GM12878 (cell line): ENCODE measurements at regions of chr4 and their contacts with region 1.

Region 1: DNA sequence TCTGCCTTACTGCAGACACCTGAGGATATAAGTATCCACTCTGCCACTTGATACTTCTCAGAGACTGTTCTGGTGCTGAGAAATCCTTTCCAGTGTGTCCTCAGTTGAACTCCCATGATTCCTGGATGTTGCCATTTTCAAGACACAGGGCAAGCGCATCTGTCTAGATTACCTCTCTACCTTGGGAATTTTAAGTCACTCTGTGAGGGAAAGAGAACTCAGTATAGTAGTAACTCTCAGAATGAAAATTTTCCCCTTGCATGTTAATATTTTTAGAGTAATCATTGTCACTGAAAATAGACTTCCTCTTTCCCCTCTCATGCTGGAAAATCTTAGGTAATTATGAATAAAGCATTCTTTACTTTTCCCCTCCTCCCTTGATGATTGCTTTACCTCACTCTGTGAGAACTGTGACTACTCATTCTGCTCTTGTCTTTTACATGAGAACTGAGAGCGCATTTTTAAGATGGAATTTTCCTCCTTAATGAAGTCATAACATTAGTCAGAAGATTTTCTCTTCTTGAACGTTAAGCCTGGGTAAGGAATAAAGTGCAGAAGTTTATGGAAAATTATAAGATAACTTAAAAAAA is 45.0 kb downstream of the TET2 start:
- DNase-seq: peak; percentile 81
- ATAC-seq: peak; percentile 65
- H3K4me3 ChIP-seq: 0 out of 2 replicates have a peak overlapping the region, but pooled peaks have one; percentile 10
- H3K27ac ChIP-seq: peak overlapping the region; percentile 81
- H3K4me1 ChIP-seq: peaks cover 46% of the 10 kb centered on the region
- H3K27me3 ChIP-seq: no peaks in the 10 kb centered on the region
- CTCF ChIP-seq: no peak
- EP300 ChIP-seq: peak in 1 of 2 experiments; percentile 72; a peak in 2 of 4 replicates
- POLR2A ChIP-seq: no peak
- RAD21 ChIP-seq: peak; percentile 34; the same call in 1 of the 2 replicates

Region 2: GRCh38 chr4:104868958-104869357 is 322.8 kb before region 1 on chr4:
- CTCF ChIA-PET with region 1: no interaction called
- POLR2A ChIA-PET with region 1: no interaction called
- RAD21 ChIA-PET with region 1: no interaction called
- SMC1A ChIA-PET with region 1: no interaction called
- in situ Hi-C with region 1: no loop called
- intact Hi-C with region 1: loop called (anchors 5 kb)
- DNase-seq: peak; percentile 79
- ATAC-seq: peak; percentile 93
- H3K4me3 ChIP-seq: peak overlapping the region; percentile 24; the same call in 1 of the 2 replicates
- H3K27ac ChIP-seq: peak overlapping the region; percentile 67
- H3K4me1 ChIP-seq: peaks cover 36% of the 10 kb centered on the region
- H3K27me3 ChIP-seq: no peaks in the 10 kb centered on the region
- CTCF ChIP-seq: no peak
- EP300 ChIP-seq: peak; percentile 92 to 96
- POLR2A ChIP-seq: no peak
- RAD21 ChIP-seq: peak; percentile 24; the same call in 1 of the 2 replicates

Region 3: DNA sequence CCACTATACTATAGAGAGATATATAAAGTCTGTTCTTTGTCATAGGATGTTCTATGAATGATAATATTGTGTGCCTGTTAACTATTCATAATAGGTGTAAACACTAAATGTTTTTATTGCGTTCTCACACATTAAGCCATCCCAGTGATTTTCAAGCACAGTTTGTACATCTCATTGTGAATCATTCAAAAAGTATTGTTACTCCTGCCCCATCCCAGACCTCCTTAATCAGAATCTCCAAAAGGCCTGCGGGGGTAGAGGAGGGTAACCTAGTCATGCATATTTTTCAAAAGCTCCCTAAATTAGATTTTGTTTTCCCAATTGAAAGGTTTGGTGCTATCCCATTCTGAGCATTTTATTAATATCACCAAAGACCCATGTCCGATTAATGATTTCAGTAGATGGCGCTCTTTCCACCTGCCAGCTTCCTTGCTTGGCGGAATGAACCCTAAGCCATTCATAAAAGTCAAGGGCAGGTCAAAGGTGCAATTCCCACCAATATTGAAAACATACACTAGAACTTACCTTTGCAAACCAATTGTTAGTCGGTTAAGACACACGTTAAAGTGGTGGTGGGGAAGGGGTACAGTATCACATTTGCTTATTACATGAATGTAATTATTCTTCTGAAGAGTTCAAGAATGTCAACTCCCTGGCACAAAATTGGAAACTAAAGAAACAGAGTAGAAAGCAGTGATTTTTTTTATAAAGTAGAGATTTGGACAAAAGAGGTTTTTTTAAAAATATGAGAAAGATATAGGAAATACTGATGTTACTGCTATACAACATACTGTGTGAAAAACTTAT is 50.8 kb before region 1 on chr4:
- CTCF ChIA-PET with region 1: interaction called, 14 read pairs
- POLR2A ChIA-PET with region 1: interaction called, 3 read pairs
- RAD21 ChIA-PET with region 1: interaction called, 4 read pairs
- SMC1A ChIA-PET with region 1: interaction called, 4 read pairs
- in situ Hi-C with region 1: no loop called
- intact Hi-C with region 1: loop called (anchors 2 kb)
- DNase-seq: no peak
- ATAC-seq: peak; percentile 59
- H3K4me3 ChIP-seq: no peak overlapping the region
- H3K27ac ChIP-seq: no peak overlapping the region
- H3K4me1 ChIP-seq: no peaks in the 10 kb centered on the region; the same call in none of the 2 replicates
- H3K27me3 ChIP-seq: no peaks in the 10 kb centered on the region
- CTCF ChIP-seq: peak; percentile 51 to 83 (median 60); a peak in 5 of 6 replicates
- EP300 ChIP-seq: no peak
- POLR2A ChIP-seq: no peak
- RAD21 ChIP-seq: peak; percentile 92

Region 4: GRCh38 chr4:105162123-105162796 is 29.5 kb before region 1 on chr4:
- CTCF ChIA-PET with region 1: no interaction called
- POLR2A ChIA-PET with region 1: no interaction called
- RAD21 ChIA-PET with region 1: interaction called, 4 read pairs
- SMC1A ChIA-PET with region 1: interaction called, 13 read pairs
- in situ Hi-C with region 1: no loop called
- intact Hi-C with region 1: no loop called
- DNase-seq: no peak
- ATAC-seq: peak; percentile 70
- H3K4me3 ChIP-seq: no peak overlapping the region
- H3K27ac ChIP-seq: no peak overlapping the region; the same call in 1 of the 2 replicates
- H3K4me1 ChIP-seq: peaks cover 5% of the 10 kb centered on the region; the same call in 1 of the 2 replicates
- H3K27me3 ChIP-seq: no peaks in the 10 kb centered on the region
- CTCF ChIP-seq: no peak
- EP300 ChIP-seq: no peak
- POLR2A ChIP-seq: no peak
- RAD21 ChIP-seq: no peak

Region 5: DNA sequence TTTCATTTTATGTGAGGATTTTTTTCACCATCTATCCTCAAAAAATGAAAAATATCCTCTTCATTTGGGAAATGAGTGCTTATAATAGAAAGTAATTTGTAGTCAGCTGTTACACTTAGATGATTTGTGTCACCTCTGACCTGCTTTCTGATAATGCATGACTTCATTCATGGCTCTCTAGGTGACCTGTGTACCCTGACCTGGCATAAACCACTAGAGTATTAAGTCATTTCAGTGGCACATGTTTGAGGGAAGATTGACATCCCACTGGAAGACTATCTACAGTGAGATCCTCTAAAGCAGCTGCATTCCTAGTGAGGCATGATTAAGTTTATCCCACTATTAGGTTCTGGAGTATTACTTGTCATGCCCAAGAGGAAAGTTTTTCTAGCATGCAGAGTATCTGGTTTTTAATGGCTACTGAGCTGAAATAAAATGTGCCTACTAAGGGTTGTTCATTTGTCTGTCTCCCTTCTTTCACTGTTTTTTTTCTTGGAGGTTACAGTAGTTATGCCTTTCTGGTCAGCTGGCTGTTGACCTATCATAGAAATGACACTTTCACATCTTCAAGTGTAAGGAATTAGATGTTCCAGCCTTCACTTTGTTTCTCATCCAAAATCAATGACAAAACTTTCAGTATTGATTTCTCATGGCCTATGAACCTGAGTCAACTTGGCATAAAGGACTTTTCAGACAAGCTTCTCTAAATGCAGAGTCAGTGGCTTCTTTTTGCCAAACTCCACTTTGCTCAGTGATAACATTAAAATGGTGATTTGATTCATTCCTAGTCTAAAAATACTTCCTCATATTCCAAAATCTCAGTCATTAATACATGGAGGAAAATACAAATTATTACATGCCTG is 11.9 kb before region 1 on chr4:
- CTCF ChIA-PET with region 1: no interaction called
- POLR2A ChIA-PET with region 1: interaction called, 3 read pairs
- RAD21 ChIA-PET with region 1: no interaction called
- SMC1A ChIA-PET with region 1: interaction called, 21 read pairs
- in situ Hi-C with region 1: no loop called
- intact Hi-C with region 1: no loop called
- DNase-seq: no peak
- ATAC-seq: peak; percentile 82
- H3K4me3 ChIP-seq: no peak overlapping the region
- H3K27ac ChIP-seq: no peak overlapping the region
- H3K4me1 ChIP-seq: no peaks in the 10 kb centered on the region
- H3K27me3 ChIP-seq: no peaks in the 10 kb centered on the region
- CTCF ChIP-seq: no peak
- EP300 ChIP-seq: no peak
- POLR2A ChIP-seq: no peak
- RAD21 ChIP-seq: no peak

Region 6: GRCh38 chr4:105215609-105216313 is 24.0 kb after region 1 on chr4:
- CTCF ChIA-PET with region 1: interaction called, 5 read pairs
- POLR2A ChIA-PET with region 1: interaction called, 12 read pairs
- RAD21 ChIA-PET with region 1: interaction called, 4 read pairs
- SMC1A ChIA-PET with region 1: interaction called, 7 read pairs
- in situ Hi-C with region 1: no loop called
- intact Hi-C with region 1: no loop called
- DNase-seq: peak; percentile 83
- ATAC-seq: peak; percentile 84
- H3K4me3 ChIP-seq: no peak overlapping the region
- H3K27ac ChIP-seq: peak overlapping the region; percentile 92
- H3K4me1 ChIP-seq: peaks cover 8% of the 10 kb centered on the region; the same call in 1 of the 2 replicates
- H3K27me3 ChIP-seq: no peaks in the 10 kb centered on the region
- CTCF ChIP-seq: no peak
- EP300 ChIP-seq: no peak
- POLR2A ChIP-seq: no peak
- RAD21 ChIP-seq: no peak

Region 7: GRCh38 chr4:105291925-105292324 is 100.2 kb after region 1 on chr4:
- CTCF ChIA-PET with region 1: no interaction called
- POLR2A ChIA-PET with region 1: no interaction called
- RAD21 ChIA-PET with region 1: no interaction called
- SMC1A ChIA-PET with region 1: no interaction called
- in situ Hi-C with region 1: no loop called
- intact Hi-C with region 1: no loop called
- DNase-seq: no peak
- ATAC-seq: no peak
- H3K4me3 ChIP-seq: no peak overlapping the region
- H3K27ac ChIP-seq: no peak overlapping the region
- H3K4me1 ChIP-seq: no peaks in the 10 kb centered on the region
- H3K27me3 ChIP-seq: no peaks in the 10 kb centered on the region
- CTCF ChIP-seq: no peak
- EP300 ChIP-seq: no peak
- POLR2A ChIP-seq: no peak
- RAD21 ChIP-seq: no peak

Region 8: DNA sequence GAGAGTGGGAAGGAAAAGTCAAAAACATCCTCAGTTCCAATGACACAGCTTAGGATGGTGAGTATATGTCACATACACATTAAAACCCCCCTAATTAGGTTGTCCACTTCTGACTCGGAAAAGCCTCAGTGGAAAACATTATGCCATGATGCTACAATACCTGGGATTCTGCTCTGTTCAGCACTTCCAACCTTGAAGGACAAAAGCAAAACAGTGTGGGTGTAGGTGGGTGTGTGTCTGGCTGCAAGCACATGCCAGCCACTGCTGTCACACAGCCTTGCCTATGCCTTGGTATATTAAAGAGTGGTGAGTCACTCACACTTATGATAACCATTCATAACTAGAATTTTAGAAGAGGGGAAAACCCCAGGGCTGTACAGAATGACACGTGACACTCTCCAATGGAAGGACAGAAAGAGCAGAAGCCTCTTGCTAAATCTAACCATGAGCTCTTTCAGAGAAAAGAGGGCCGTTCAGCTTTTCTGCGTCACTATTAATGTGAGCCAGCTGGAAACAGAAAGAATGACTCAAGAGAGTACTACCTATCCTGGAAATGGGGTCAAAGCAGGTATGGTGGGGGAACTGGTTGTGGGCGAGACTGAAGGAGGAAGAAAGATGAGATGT is 114.6 kb after region 1 on chr4:
- CTCF ChIA-PET with region 1: no interaction called
- POLR2A ChIA-PET with region 1: no interaction called
- RAD21 ChIA-PET with region 1: interaction called, 17 read pairs
- SMC1A ChIA-PET with region 1: interaction called, 19 read pairs
- in situ Hi-C with region 1: no loop called
- intact Hi-C with region 1: loop called (anchors 5 kb)
- DNase-seq: peak; percentile 91
- ATAC-seq: peak; percentile 91
- H3K4me3 ChIP-seq: peak overlapping the region; percentile 24; the same call in 1 of the 2 replicates
- H3K27ac ChIP-seq: peak overlapping the region; percentile 86
- H3K4me1 ChIP-seq: peaks cover 14% of the 10 kb centered on the region
- H3K27me3 ChIP-seq: no peaks in the 10 kb centered on the region
- CTCF ChIP-seq: no peak
- EP300 ChIP-seq: peak; percentile 75 to 77; a peak in 3 of 4 replicates
- POLR2A ChIP-seq: peak; percentile 43; the same call in 1 of the 2 replicates
- RAD21 ChIP-seq: 0 out of 2 replicates have a peak, but pooled peaks have one; percentile 3